ENCODE measurements at regions of chr3 and their contacts with region 1.

Region 1: GRCh38 chr3:126389112-126389793 is 5.5 kb upstream of the CFAP100 start:
- DNase-seq: peak; percentile 94 to 96
- ATAC-seq: peak; percentile 96
- H3K4me3 ChIP-seq: no peak overlapping the region
- H3K27ac ChIP-seq: peak overlapping the region; percentile 14 to 73
- H3K4me1 ChIP-seq: no peaks in the 10 kb centered on the region
- H3K27me3 ChIP-seq: no peaks in the 10 kb centered on the region

Region 2: GRCh38 chr3:126197854-126198584 is 191.2 kb before region 1 on chr3:
- intact Hi-C with region 1: loop called in 1 of 2 experiments (anchors 5 kb)
- DNase-seq: peak; percentile 79 to 88
- ATAC-seq: peak; percentile 89
- H3K4me3 ChIP-seq: no peak overlapping the region
- H3K27ac ChIP-seq: no peak overlapping the region
- H3K4me1 ChIP-seq: no peaks in the 10 kb centered on the region
- H3K27me3 ChIP-seq: no peaks in the 10 kb centered on the region

Region 3: GRCh38 chr3:126245811-126246727 is 143.2 kb before region 1 on chr3:
- intact Hi-C with region 1: loop called (anchors 1 to 2 kb)
- DNase-seq: peak in 1 of 2 donors; percentile 79
- ATAC-seq: peak; percentile 76
- H3K4me3 ChIP-seq: no peak overlapping the region
- H3K27ac ChIP-seq: no peak overlapping the region
- H3K4me1 ChIP-seq: no peaks in the 10 kb centered on the region
- H3K27me3 ChIP-seq: no peaks in the 10 kb centered on the region

Region 4: GRCh38 chr3:126259411-126260391 is 129.6 kb before region 1 on chr3:
- intact Hi-C with region 1: loop called in 1 of 2 experiments (anchors 1 kb)
- DNase-seq: peak; percentile 76 to 87
- ATAC-seq: peak; percentile 85
- H3K4me3 ChIP-seq: no peak overlapping the region
- H3K27ac ChIP-seq: peak overlapping the region in 1 of 2 donors; percentile 59
- H3K4me1 ChIP-seq: no peaks in the 10 kb centered on the region
- H3K27me3 ChIP-seq: no peaks in the 10 kb centered on the region

Region 5: GRCh38 chr3:126765187-126766069 is 376.2 kb after region 1 on chr3:
- intact Hi-C with region 1: no loop called
- DNase-seq: no peak
- ATAC-seq: no peak
- H3K4me3 ChIP-seq: no peak overlapping the region
- H3K27ac ChIP-seq: no peak overlapping the region
- H3K4me1 ChIP-seq: no peaks in the 10 kb centered on the region
- H3K27me3 ChIP-seq: no peaks in the 10 kb centered on the region

Measured in aorta (tissue), 5 donors.